ENCODE measurements at regions of chr20 and their contacts with region 1.

Region 1: GRCh38 chr20:51639206-51639832 is 96.8 kb upstream of the NFATC2 start:
- DNase-seq: no peak
- CTCF ChIP-seq: peak; percentile 69

Region 2: DNA sequence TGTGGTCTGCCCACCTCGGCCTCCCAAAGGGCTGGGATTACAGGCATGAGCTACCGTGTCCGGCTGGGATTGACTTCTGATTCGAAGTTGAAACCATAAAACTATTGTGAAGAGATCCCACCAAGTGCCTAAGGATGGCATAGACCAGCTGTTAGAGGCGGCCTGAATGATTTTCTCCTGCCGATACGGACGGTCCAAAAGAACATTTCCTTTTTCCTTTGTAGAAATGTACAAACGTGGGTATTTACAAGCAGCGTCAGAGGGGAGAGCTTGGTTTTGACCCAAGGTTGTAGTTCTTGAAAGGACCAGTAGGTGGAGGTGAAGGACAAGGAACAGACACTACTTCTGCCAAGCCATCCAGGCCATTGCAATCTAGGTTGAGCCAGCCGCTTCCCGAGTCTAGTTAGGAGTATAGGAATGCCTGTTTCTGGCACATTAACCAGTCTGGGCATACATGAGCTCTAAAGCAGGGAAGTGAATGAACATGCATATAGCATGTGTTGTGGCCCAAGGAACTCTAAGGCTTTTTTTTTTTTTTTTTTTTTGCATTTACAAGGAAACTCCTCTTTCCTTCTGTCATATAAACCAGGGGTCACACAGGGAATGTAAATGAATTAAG is 651.6 kb before region 1 on chr20:
- in situ Hi-C with region 1: loop called (anchors 25 kb)
- DNase-seq: peak; percentile 73
- CTCF ChIP-seq: peak; percentile 77

Measured in GM13977 (cell line).